ENCODE measurements at regions of chr17 and their contacts with region 1.

Region 1: DNA sequence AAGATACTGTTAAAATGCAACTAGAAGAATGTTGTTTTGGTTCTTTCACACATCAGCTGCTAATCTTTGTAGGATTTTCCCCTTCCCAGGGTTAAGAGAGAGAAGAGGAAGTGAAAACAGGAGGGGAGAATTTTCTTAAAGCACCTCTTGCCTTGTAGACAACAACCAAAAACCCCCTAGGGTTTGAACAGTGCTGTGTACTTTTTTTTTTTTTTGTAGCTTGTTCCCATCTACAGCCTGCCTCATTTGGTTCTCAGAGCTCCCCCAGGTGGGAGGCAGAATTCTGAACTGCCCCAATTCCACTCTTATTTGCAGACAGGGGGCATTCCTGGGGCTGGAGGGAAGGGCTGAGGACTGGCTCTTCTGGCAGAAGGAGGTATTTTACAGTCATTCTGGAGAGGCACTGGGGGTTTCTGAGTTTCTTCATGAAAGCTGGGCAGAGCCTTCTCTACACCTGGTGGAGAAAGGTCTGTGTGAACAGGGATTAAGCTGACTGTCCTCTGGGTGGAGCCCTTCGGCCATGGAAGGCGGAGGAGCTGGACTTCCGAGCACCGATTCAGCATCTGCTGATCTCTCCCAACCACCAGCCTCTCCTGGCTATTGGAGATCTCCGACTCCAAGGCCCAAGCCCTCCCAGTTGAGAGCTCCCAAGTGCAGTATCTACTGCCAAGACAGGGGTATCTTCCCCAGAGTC is 32.2 kb downstream of the SMARCE1 start:
- DNase-seq: peak; percentile 57
- H3K4me3 Mint-ChIP-seq: peak overlapping the region; percentile 23
- H3K27ac Mint-ChIP-seq: peak overlapping the region; percentile 79
- H3K4me1 Mint-ChIP-seq: peaks cover 74% of the 10 kb centered on the region
- H3K27me3 Mint-ChIP-seq: no peaks in the 10 kb centered on the region

Region 2: GRCh38 chr17:40371261-40371929 is 244.0 kb before region 1 on chr17:
- CTCF ChIA-PET with region 1: interaction called, 4 read pairs
- POLR2A ChIA-PET with region 1: no interaction called
- intact Hi-C with region 1: loop called (anchors 5 kb)
- DNase-seq: peak; percentile 57
- H3K4me3 Mint-ChIP-seq: no peak overlapping the region
- H3K27ac Mint-ChIP-seq: no peak overlapping the region
- H3K4me1 Mint-ChIP-seq: peaks cover 31% of the 10 kb centered on the region
- H3K27me3 Mint-ChIP-seq: no peaks in the 10 kb centered on the region

Region 3: DNA sequence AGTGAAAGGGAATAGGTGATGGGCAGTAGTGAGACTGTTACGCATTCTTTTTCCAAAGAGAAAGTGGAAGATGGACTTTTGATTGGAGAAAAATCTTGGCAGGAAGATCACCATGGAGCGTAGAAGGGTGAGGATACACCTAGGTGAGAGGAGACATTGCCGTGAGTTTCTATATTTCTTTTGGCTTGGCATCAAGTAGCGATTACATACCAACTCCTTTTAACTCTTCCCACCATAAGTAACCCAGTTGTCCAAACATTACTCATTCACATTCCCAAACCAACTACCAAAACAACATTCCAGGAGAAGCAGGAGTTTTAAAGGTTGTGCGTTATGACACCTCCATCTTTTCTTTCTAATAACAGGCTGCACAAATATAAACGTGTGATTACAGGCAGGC is 195.1 kb after region 1 on chr17:
- CTCF ChIA-PET with region 1: no interaction called
- POLR2A ChIA-PET with region 1: no interaction called
- intact Hi-C with region 1: no loop called
- DNase-seq: no peak
- H3K4me3 Mint-ChIP-seq: no peak overlapping the region
- H3K27ac Mint-ChIP-seq: no peak overlapping the region
- H3K4me1 Mint-ChIP-seq: no peaks in the 10 kb centered on the region
- H3K27me3 Mint-ChIP-seq: peaks cover 58% of the 10 kb centered on the region

Measured in activated CD4-positive, alpha-beta memory T cell treated with anti-CD3 and anti-CD28 coated beads for 36 hours (primary cell).